ENCODE measurements at regions of chr21 and their contacts with region 1.

Region 1: GRCh38 chr21:41612674-41613532 is 104.9 kb upstream of the TMPRSS2 start:
- DNase-seq: peak; percentile 43 to 94 (median 66)

Region 2: GRCh38 chr21:41283211-41283818 is 329.6 kb before region 1 on chr21:
- intact Hi-C with region 1: loop called (anchors 10 kb)
- DNase-seq: peak in 3 of 10 donors; percentile 30 to 53 (median 36)

Region 3: DNA sequence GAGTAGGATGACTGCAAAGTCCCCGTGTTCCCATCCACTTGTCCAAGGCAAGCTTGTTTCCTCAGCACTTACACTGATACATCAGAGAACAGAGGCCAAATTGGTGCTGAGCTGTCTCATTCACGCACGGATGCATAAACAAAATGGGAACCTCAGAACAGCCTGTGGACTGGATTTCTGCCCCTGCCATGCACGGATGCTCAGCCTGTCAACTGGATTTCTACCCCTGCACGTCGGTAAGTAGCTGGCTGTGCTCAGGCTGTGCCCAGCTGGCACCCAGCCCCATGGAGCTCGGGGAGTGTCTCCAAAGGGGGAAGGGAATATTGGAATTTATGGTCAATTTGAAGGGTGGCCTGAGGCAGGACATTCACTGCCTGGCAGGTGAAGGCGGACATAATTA is 64.1 kb before region 1 on chr21:
- intact Hi-C with region 1: no loop called
- DNase-seq: no peak

Region 4: DNA sequence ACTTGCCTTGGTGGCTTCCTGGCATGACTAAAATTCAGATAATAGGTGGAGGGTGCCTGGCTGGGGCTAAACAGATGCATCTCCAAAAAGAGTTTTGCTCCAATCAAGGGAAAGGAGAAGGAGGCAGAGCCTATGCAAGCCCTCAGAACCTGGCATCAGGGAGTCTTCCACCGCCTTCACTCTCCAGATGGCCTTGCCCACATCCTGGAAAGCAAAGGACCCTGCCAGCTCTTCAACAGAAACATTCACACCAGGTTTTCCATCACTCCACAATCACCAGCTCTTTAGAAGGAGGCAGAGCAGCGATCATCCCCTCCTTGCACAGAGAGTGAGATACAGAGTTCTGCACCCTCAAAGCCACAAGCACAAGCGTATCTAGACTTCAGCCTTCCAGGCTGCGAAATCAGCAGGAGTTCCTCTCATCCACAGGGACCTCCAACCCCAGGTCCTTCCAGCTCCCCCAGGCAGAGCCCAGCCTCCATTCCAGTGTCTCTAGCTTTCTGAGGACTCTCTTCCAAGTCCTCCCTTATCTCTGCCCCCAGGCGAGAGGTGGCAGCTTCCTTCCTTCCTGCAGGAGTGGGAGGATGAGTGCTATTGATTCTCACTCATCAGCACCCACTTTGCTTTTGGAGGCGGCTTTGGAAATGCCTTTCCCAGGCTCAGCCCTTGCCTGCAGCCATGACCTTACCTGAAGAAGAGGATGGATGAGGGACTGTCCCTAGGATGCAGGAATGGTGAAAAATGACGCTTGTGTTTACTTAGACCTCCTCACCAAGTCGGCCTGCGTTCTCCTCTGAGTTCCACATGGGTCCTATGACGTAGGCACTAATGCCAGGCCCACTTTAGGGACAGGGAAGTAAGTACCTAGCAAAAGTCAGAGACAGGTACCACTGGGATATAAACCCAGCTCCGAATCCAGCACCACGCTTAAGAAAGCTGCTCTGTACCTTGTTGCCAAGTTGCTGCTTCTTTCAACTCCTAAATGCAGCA is 78.6 kb after region 1 on chr21:
- intact Hi-C with region 1: loop called (anchors 5 kb)
- DNase-seq: peak in 6 of 10 donors; percentile 37 to 91 (median 53)

Region 5: GRCh38 chr21:41777951-41778874 is 165.3 kb after region 1 on chr21:
- intact Hi-C with region 1: loop called (anchors 2 kb)
- DNase-seq: peak; percentile 65 to 97 (median 85)

Region 6: GRCh38 chr21:41816220-41817165 is 203.6 kb after region 1 on chr21:
- intact Hi-C with region 1: loop called (anchors 2 kb)
- DNase-seq: peak in 9 of 10 donors; percentile 52 to 95 (median 68)

Region 7: DNA sequence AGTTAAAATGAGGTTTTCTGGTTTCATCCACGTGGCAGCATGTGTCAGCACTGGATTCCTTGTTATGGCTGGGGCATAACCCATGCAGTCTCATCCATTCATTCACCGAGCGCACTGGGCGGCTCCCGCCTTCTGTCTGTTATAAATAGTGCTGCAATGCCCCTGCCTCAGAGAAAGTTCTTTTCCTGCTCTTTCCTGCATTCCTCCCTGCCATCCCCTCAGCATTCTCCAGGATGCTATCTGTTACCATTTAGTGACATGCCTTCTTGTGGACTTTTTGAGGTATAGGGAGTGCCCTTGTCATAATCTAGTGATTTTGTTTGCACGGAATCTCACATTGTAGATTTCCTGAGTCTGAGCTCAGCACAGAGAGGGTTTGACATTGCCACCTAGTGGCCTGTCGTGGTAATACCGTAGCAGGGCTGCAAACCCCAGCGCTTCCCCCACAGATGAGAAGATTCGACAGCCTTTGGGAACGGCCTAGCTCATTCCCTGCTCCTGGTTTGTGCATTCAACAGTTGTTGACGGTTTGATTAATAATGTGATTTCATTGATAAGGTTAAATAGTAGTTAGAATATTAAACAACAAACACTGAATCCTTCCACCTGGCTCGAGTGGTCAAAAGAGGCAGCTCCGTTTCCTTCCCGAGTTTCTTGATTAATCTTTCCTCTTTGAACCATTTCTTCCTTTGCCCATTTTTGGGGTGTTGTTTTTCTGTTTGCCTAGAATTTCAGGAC is 504.5 kb after region 1 on chr21:
- intact Hi-C with region 1: loop called (anchors 10 kb)
- DNase-seq: peak; percentile 68 to 96 (median 88)

Measured in posterior cingulate gyrus (tissue), 11 donors.